ENCODE measurements at regions of chr3 and their contacts with region 1.

Region 1: DNA sequence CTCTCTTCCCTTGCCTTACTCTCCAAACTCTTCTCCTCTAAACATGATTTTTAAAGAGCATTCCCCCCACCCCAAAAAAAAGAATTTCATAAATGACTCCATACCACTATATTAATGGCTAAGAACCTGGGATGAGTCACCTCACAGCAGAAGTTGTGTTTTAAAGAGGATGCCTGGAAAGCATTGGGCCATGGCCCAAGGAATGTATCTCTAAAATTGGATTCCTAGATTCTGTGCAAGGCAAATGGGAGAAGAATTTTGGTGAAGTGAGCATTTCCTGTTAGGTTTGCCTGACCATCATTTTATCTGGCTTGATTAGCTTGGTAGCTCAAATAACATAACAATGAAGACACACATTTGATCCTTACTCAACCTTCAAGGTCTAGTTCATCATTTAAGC is 251.4 kb downstream of the NR1D2 start:
- DNase-seq: no peak
- H3K4me3 ChIP-seq: no peak overlapping the region
- H3K27ac ChIP-seq: no peak overlapping the region
- H3K4me1 ChIP-seq: no peaks in the 10 kb centered on the region
- H3K27me3 ChIP-seq: no peaks in the 10 kb centered on the region
- CTCF ChIP-seq: no peak
- EP300 ChIP-seq: no peak
- POLR2A ChIP-seq: no peak
- RAD21 ChIP-seq: no peak

Region 2: DNA sequence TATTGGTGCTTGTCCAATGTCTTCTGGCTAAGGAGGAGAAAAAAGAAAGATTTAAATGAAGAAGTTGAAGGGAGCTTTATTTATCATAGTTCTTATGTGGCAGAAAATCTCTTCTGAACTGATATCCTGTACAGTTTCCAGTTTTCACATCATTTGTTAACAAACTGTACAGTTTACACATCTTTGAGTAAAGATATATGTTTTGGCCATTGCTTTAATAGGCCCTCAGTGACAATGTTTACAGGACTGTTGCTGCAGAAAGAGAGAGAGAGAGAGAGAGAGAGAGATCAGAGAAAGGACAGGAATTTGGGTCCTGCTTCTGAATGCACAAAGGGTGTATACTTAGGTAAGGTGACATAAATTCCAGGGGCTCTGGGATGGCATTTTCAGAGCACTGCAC is 63.1 kb before region 1 on chr3:
- CTCF ChIA-PET with region 1: no interaction called
- POLR2A ChIA-PET with region 1: no interaction called
- DNase-seq: no peak
- H3K4me3 ChIP-seq: no peak overlapping the region
- H3K27ac ChIP-seq: no peak overlapping the region
- H3K4me1 ChIP-seq: no peaks in the 10 kb centered on the region
- H3K27me3 ChIP-seq: no peaks in the 10 kb centered on the region
- CTCF ChIP-seq: no peak
- EP300 ChIP-seq: no peak
- POLR2A ChIP-seq: no peak
- RAD21 ChIP-seq: no peak

Region 3: DNA sequence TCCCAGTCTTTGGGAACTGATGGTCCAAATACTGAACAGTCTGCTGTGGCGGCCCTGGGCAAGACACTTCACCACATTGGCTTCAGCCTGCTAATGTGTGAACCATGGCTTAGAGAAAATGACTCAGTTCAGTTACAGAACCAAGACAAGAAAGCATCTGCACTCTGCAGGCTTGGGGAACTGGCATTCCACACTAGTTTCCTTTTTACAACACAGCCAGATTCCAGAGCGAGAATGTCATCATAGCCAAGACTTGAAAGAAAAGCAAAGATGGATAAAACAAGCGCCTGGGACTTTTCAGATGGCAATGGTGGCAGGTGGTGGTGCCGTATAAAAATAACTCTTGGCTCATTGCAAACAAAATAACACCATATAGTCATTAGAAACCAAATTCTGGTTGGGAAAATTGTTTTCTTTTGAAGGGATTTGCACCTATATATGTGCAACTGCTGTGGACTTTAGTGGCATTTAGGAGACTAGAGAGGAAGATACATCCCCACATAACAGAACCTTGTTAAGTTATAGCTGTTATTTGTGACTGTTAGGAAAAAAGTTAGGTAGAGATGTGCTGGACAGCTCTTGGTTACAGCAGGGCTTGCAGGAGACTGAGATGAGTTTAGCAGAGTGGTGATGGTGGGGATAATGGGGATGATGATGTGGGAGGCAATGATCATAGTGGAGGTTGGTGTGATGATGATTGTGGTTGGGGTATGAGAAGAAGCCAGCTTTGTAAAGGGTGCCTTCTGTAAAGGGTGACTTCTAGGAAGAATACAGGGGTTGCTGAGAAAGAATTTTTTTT is 24.5 kb after region 1 on chr3:
- CTCF ChIA-PET with region 1: interaction called, 13 read pairs
- POLR2A ChIA-PET with region 1: no interaction called
- DNase-seq: peak in 1 of 2 experiments; percentile 19
- H3K4me3 ChIP-seq: no peak overlapping the region
- H3K27ac ChIP-seq: no peak overlapping the region
- H3K4me1 ChIP-seq: peaks cover 0 to 8% (median 4%) of the 10 kb centered on the region in 4 experiments; a peak in 3 of 7 replicates
- H3K27me3 ChIP-seq: peaks cover 0 to 1% (median 0%) of the 10 kb centered on the region in 4 experiments; a peak in 1 of 7 replicates
- CTCF ChIP-seq: no peak
- EP300 ChIP-seq: no peak
- POLR2A ChIP-seq: no peak
- RAD21 ChIP-seq: no peak

Measured in H1 (cell line).